Panc1 (cell line): ENCODE measurements at regions of chr16 and their contacts with region 1.

Region 1: DNA sequence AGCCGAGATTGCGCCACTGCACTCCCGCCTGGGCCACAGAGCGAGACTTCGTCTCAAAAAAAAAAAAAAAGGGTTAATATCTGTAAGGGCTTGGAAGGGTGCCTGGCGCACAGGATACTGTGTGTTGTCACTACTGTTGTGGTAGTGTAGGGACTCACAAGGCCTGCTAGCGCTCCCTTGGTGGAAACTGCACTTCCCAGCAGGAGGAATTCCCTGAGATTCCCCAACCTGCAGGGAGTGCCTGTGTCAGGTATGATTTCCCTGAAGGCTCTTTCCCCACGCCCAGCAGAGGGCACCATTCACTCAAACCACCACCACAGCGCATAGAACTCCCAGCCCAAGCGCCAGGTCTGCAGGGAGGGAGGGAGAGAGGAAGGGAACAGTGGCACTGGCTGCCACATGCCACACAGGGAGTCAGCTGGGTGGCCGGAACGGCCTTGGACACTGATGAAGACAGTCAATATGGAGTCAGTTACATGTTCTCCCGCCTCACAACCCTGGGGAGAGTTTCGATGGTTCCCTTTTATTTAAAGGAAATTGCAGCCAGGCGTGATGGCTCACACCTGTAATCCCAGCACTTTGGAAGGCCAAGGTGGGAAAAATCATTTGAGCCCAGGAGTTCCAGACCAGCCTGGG is 32.7 kb upstream of the CDH1 start:
- DNase-seq: peak; percentile 58
- ATAC-seq: peak; percentile 95
- H3K4me3 ChIP-seq: no peak overlapping the region
- H3K27ac ChIP-seq: no peak overlapping the region
- H3K4me1 ChIP-seq: peaks cover 5% of the 10 kb centered on the region
- H3K27me3 ChIP-seq: no peaks in the 10 kb centered on the region
- CTCF ChIP-seq: peak; percentile 85

Region 2: DNA sequence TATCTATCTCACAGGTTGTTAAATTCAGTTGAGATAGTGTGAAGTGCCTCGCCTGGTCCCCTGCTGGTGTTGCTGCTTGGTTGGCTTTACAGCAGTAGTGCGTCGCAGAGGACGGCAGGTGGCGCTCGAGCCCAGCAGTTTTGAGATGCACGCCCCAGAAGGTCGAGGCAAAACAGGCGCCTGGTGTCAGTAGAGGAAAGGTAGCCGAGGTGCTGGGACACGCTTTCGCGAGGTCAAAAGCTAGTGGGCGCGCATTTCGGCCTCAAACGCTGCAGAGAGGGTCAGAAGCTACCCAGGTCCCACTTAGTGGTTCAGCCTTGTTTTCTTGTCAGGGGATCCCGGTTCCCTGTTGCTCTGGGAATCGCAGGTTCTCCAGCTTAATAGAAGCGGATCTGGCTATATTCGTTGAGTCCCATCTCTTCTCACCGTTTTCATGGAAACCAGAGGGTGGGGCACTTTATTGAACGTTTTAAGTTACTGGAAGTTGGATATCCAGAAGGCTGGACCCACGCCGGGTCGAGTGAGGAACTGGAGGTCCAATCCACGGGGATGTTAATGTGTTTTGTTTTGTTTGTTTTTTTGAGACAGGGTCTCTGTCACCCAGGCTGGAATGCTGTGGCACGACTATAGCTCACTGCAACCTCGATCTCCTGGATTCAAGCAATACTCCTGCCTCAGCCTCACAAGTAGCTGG is 175.5 kb before region 1 on chr16:
- CTCF ChIA-PET with region 1: no interaction called
- POLR2A ChIA-PET with region 1: no interaction called
- in situ Hi-C with region 1: no loop called
- intact Hi-C with region 1: loop called (anchors 10 kb)
- DNase-seq: peak; percentile 64
- ATAC-seq: peak; percentile 88
- H3K4me3 ChIP-seq: peak overlapping the region; percentile 73 to 74
- H3K27ac ChIP-seq: no peak overlapping the region
- H3K4me1 ChIP-seq: no peaks in the 10 kb centered on the region; the same call in 1 of the 2 replicates
- H3K27me3 ChIP-seq: no peaks in the 10 kb centered on the region
- CTCF ChIP-seq: peak; percentile 90

Region 3: GRCh38 chr16:68800257-68800875 is 96.0 kb after region 1 on chr16:
- CTCF ChIA-PET with region 1: no interaction called
- POLR2A ChIA-PET with region 1: no interaction called
- in situ Hi-C with region 1: no loop called
- intact Hi-C with region 1: loop called (anchors 5 kb)
- DNase-seq: peak; percentile 63
- ATAC-seq: peak; percentile 88
- H3K4me3 ChIP-seq: no peak overlapping the region
- H3K27ac ChIP-seq: no peak overlapping the region
- H3K4me1 ChIP-seq: no peaks in the 10 kb centered on the region
- H3K27me3 ChIP-seq: no peaks in the 10 kb centered on the region
- CTCF ChIP-seq: peak; percentile 80